Naive thymus-derived CD4-positive, alpha-beta T cell (primary cell): ENCODE measurements at regions of chr2 and their contacts with region 1.

Region 1: DNA sequence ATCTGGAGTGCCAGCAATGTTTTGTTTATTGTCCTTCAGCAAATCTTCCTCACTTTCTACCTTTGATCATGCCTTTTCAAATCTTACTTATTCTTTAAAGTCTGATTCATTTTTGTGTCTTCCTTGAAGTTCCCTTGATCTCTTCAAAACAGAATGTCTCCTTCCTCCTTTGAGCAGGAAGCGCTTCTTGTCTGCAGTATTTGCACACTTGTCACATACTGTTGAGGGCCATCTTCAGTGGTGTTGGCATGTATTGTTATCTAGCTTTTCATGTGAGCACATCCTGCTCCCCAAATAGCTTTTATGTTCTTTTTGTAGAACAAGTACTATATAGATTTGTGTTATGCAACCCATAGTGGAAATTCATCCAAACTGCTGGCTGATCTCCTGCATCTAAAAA is 5.9 kb upstream of the CERS6 start:
- DNase-seq: peak in 7 of 9 donors; percentile 35 to 72 (median 57)
- ATAC-seq: peak; percentile 84
- H3K4me3 ChIP-seq: no peak overlapping the region
- H3K4me3 Mint-ChIP-seq: peak overlapping the region in 9 of 10 donors; percentile 15 to 78 (median 50)
- H3K27ac ChIP-seq: no peak overlapping the region
- H3K27ac Mint-ChIP-seq: peak overlapping the region in 4 of 9 donors; percentile 59 to 95 (median 70)
- H3K4me1 ChIP-seq: peaks cover 0 to 38% of the 10 kb centered on the region in 2 donors
- H3K4me1 Mint-ChIP-seq: peaks cover 7 to 54% (median 26%) of the 10 kb centered on the region in 7 donors
- H3K27me3 ChIP-seq: no peaks in the 10 kb centered on the region
- H3K27me3 Mint-ChIP-seq: no peaks in the 10 kb centered on the region

Region 2: GRCh38 chr2:168136392-168136977 is 313.7 kb before region 1 on chr2:
- CTCF ChIA-PET with region 1: no interaction called
- POLR2A ChIA-PET with region 1: no interaction called
- intact Hi-C with region 1: no loop called
- DNase-seq: peak in 5 of 9 donors; percentile 14 to 36 (median 27)
- ATAC-seq: peak; percentile 67
- H3K4me3 ChIP-seq: no peak overlapping the region
- H3K4me3 Mint-ChIP-seq: no peak overlapping the region
- H3K27ac ChIP-seq: no peak overlapping the region
- H3K27ac Mint-ChIP-seq: peak overlapping the region in 2 of 9 donors; percentile 4 to 44
- H3K4me1 ChIP-seq: no peaks in the 10 kb centered on the region
- H3K4me1 Mint-ChIP-seq: peaks cover 4 to 11% (median 8%) of the 10 kb centered on the region in 7 donors
- H3K27me3 ChIP-seq: no peaks in the 10 kb centered on the region
- H3K27me3 Mint-ChIP-seq: no peaks in the 10 kb centered on the region

Region 3: DNA sequence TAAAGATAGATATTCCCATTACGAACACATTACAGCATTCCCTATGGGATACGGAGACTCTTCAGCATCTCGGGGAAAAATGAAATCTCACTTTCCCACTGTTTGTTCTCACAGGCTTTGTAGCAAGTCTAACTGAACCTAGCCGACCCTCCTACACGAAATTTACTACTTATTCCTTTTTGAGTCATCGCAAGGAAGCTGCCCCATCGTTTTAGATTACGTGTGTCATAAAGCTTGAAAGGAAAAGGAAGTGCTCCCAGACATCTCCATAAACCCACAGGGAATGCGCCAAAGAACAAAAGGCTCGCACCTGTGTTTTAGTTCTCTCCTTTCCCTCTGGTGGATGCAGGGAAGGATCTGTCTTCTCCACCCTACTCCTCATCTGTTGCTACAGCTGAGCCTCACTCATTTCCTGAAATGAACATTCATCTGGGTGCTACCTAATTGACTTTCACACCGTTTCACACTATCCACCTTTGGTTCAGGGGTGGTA is 126.6 kb before region 1 on chr2:
- CTCF ChIA-PET with region 1: no interaction called
- POLR2A ChIA-PET with region 1: no interaction called
- intact Hi-C with region 1: no loop called
- DNase-seq: no peak
- ATAC-seq: no peak
- H3K4me3 ChIP-seq: no peak overlapping the region
- H3K4me3 Mint-ChIP-seq: no peak overlapping the region
- H3K27ac ChIP-seq: no peak overlapping the region
- H3K27ac Mint-ChIP-seq: no peak overlapping the region
- H3K4me1 ChIP-seq: no peaks in the 10 kb centered on the region
- H3K4me1 Mint-ChIP-seq: peaks cover 0 to 2% (median 0%) of the 10 kb centered on the region in 7 donors
- H3K27me3 ChIP-seq: no peaks in the 10 kb centered on the region
- H3K27me3 Mint-ChIP-seq: peaks cover 5 to 20% (median 14%) of the 10 kb centered on the region in 5 donors

Region 4: GRCh38 chr2:168434146-168434545 is 16.0 kb before region 1 on chr2:
- CTCF ChIA-PET with region 1: interaction called, 4 read pairs
- POLR2A ChIA-PET with region 1: interaction called, 35 read pairs
- intact Hi-C with region 1: loop called in 1 of 2 experiments (anchors 1 kb)
- DNase-seq: no peak
- ATAC-seq: no peak
- H3K4me3 ChIP-seq: no peak overlapping the region
- H3K4me3 Mint-ChIP-seq: peak overlapping the region in 4 of 10 donors; percentile 34 to 78 (median 70)
- H3K27ac ChIP-seq: no peak overlapping the region
- H3K27ac Mint-ChIP-seq: peak overlapping the region in 5 of 9 donors; percentile 6 to 94 (median 48)
- H3K4me1 ChIP-seq: peaks cover 6 to 59% of the 10 kb centered on the region in 2 donors
- H3K4me1 Mint-ChIP-seq: peaks cover 31 to 94% (median 70%) of the 10 kb centered on the region in 7 donors
- H3K27me3 ChIP-seq: no peaks in the 10 kb centered on the region
- H3K27me3 Mint-ChIP-seq: no peaks in the 10 kb centered on the region

Region 5: DNA sequence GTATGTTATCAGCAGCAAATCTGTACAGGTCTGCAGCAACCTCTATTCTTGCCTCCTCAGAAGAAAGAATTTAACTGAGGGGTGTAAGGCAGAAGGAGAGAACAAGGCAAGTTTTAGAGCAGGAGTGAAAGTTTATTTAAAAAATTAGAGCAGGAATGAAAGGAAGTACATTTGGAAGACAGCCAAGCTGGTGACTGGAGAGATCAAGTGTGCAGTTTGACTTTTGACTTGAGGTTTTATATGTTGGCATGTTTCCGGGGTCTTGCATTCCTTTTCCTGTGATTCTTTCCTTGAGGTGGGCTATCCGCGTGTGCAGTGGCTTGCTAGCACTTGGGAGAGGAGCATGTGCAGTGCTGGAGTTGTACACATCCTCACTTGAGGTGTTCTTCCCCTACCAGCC is 10.6 kb before region 1 on chr2:
- CTCF ChIA-PET with region 1: interaction called, 5 read pairs
- POLR2A ChIA-PET with region 1: interaction called, 35 read pairs
- intact Hi-C with region 1: loop called in 1 of 2 experiments (anchors 1 kb)
- DNase-seq: peak in 1 of 9 donors; percentile 29
- ATAC-seq: no peak
- H3K4me3 ChIP-seq: no peak overlapping the region
- H3K4me3 Mint-ChIP-seq: peak overlapping the region in 7 of 10 donors; percentile 0 to 75 (median 41)
- H3K27ac ChIP-seq: no peak overlapping the region
- H3K27ac Mint-ChIP-seq: peak overlapping the region in 2 of 9 donors; percentile 8 to 27
- H3K4me1 ChIP-seq: peaks cover 0 to 44% of the 10 kb centered on the region in 2 donors
- H3K4me1 Mint-ChIP-seq: peaks cover 12 to 85% (median 67%) of the 10 kb centered on the region in 7 donors
- H3K27me3 ChIP-seq: no peaks in the 10 kb centered on the region
- H3K27me3 Mint-ChIP-seq: peaks cover 0 to 2% (median 0%) of the 10 kb centered on the region in 5 donors